H1 (cell line): ENCODE measurements at regions of chr3 and their contacts with region 1.

Region 1: GRCh38 chr3:14633819-14634424 is 17.6 kb upstream of the CCDC174 start:
- DNase-seq: peak in 1 of 2 experiments; percentile 57
- H3K4me3 ChIP-seq: no peak overlapping the region
- H3K27ac ChIP-seq: no peak overlapping the region
- H3K4me1 ChIP-seq: no peaks in the 10 kb centered on the region
- H3K27me3 ChIP-seq: no peaks in the 10 kb centered on the region; a peak in 1 of 7 replicates
- CTCF ChIP-seq: peak; percentile 84 to 99 (median 95)
- EP300 ChIP-seq: no peak
- POLR2A ChIP-seq: no peak
- RAD21 ChIP-seq: peak; percentile 54 to 67

Region 2: DNA sequence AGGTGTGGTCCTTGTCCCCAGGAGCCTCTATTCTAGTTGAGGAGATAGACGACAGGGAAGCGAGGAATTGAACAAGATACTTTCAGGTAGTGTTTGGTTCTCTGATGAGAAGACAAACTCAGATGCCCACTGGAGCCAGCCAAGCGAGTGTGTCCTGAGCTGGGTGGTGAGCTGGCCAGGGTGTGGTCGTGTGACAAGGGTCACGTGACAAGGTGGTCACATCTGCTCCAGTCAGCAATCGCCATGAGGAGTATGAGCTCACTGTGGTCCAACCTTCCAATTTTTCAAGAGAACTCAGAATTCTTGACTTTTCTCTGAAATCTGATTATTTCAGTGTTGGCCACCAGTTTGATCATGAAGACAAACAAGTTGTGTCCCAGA is 192.0 kb before region 1 on chr3:
- CTCF ChIA-PET with region 1: no interaction called
- POLR2A ChIA-PET with region 1: no interaction called
- DNase-seq: no peak
- H3K4me3 ChIP-seq: no peak overlapping the region
- H3K27ac ChIP-seq: no peak overlapping the region
- H3K4me1 ChIP-seq: peaks cover 5 to 16% (median 9%) of the 10 kb centered on the region in 4 experiments
- H3K27me3 ChIP-seq: no peaks in the 10 kb centered on the region; a peak in 1 of 7 replicates
- CTCF ChIP-seq: no peak
- EP300 ChIP-seq: no peak
- POLR2A ChIP-seq: no peak
- RAD21 ChIP-seq: no peak

Region 3: DNA sequence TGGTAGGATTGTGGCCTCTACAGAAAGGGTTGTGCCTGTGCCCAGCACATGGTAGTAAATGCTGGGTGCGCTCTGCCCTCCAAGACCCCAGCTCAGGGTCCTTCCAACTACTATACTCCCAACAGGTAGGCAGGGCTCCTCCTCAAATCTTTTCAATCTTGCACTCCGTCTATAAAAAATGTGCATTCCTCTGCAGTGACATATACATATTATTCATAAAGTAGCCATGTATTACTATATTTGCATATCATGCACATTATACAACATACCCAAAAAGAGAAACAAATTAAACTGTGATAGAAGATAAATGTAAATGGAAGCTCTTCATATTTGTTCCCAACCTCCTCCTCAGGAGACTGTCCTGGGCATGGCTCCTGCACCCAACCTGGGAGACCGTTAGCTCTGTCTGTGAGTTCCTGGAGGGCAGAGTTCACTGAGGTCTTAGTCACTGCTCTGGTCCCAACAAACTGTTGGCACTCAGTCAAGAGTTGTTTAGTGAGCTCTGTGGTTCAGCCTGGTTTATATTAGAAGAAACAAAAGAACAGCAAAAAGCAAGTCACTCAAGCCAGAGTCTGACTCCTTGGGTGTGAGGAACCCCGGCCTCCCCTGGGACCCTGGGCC is 46.1 kb before region 1 on chr3:
- CTCF ChIA-PET with region 1: no interaction called
- POLR2A ChIA-PET with region 1: no interaction called
- DNase-seq: no peak
- H3K4me3 ChIP-seq: no peak overlapping the region
- H3K27ac ChIP-seq: no peak overlapping the region
- H3K4me1 ChIP-seq: peaks cover 0 to 2% (median 0%) of the 10 kb centered on the region in 4 experiments; a peak in 2 of 7 replicates
- H3K27me3 ChIP-seq: no peaks in the 10 kb centered on the region
- CTCF ChIP-seq: no peak
- EP300 ChIP-seq: no peak
- POLR2A ChIP-seq: no peak
- RAD21 ChIP-seq: no peak

Region 4: DNA sequence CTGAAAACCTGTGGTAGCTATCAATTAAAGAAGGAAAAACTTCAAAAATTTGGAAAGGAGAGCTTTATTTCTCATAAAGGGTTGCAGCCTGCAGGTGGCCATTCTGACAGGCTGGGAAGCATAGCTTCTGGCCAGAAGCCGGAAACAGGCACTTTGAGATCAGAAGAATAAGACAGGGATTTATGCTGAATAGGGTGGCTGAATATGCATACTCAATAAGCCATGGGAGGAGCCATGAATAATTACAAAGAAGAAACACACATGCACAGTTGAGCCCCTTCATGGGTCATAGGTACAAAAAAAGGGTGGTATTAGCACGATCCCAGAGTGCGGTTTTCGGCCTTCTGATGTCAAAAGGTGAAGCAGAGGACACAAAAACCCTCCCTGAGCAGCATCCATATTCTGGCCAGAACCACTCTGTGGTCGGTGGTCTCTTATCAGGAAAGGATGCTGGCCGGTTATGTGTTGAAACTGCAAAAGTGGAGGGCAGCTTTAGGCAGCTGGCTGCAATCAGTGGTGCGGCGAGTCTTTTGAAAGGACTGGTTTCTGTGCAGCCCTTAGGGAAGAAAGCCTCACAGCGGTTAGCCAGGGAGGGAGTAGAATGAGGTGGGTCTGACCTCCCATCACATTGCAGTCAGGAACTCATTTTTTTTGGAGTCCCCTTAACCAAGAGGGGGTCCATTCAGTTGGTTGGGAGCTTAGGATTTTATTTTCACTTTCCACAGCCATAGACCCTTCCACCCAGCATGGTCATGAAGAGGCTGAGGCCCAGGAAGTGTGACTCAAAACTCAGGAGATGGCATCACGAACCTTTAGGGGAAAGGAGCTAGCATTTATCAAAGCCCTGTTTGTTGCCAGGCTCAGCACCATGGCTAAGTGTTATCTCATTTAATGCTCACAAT is 17.1 kb before region 1 on chr3:
- CTCF ChIA-PET with region 1: interaction called, 19 read pairs
- POLR2A ChIA-PET with region 1: no interaction called
- DNase-seq: no peak
- H3K4me3 ChIP-seq: no peak overlapping the region
- H3K27ac ChIP-seq: no peak overlapping the region
- H3K4me1 ChIP-seq: peaks cover 0 to 4% (median 0%) of the 10 kb centered on the region in 4 experiments; a peak in 2 of 7 replicates
- H3K27me3 ChIP-seq: no peaks in the 10 kb centered on the region
- CTCF ChIP-seq: no peak
- EP300 ChIP-seq: no peak
- POLR2A ChIP-seq: no peak
- RAD21 ChIP-seq: no peak

Region 5: GRCh38 chr3:14651440-14652251 is 17.7 kb after region 1 on chr3 and contains the start of gene CCDC174:
- CTCF ChIA-PET with region 1: interaction called, 23 read pairs
- POLR2A ChIA-PET with region 1: interaction called, 5 read pairs
- DNase-seq: peak; percentile 84 to 96
- H3K4me3 ChIP-seq: peak within 1 kb of the TSS; percentile 88 to 99 (median 93)
- H3K27ac ChIP-seq: peak within 1 kb of the TSS; percentile 89
- H3K4me1 ChIP-seq: no peaks in the 10 kb centered on the region; a peak in 1 of 7 replicates
- H3K27me3 ChIP-seq: no peaks in the 10 kb centered on the region; a peak in 1 of 7 replicates
- CTCF ChIP-seq: no peak
- EP300 ChIP-seq: no peak
- POLR2A ChIP-seq: peak; percentile 58 to 94
- RAD21 ChIP-seq: no peak
- total RNA-seq, gene CCDC174: 11.9 and 14.1 TPM in 2 replicates